ENCODE measurements at regions of chr5 and their contacts with region 1.

Region 1: DNA sequence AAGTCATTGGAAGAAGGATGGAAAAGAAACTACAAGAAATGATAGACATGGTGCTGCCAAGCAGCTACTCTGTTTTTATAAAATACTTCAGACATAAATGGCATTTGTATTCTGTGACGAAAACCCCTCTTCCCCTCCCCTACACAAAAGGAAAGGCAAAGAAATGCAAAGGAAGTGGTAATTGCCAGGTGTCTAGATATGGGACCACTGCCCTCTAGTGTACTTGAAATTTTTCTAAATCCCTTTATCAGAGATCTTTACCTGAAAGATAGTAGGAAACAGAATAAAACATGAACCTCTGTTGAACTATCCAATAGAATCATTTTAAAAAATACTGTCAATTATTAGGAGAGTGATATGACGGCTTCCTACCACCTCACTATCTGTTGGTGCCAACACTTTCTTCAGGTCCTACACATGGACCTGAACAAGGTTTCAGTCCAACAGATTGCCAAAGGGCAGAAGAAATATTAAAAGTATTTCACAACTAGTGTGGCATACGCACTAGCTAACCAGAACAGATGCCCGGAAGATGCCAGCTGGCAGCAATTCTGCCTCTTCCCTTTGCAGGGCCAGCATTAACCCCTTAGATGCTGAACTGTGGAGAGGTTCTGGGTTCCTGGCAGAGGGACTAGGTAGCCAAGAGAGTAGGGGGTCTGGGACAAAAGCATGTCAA is 104.1 kb downstream of the TSSK1B start:
- DNase-seq: peak; percentile 14
- H3K4me3 Mint-ChIP-seq: no peak overlapping the region
- H3K27ac Mint-ChIP-seq: no peak overlapping the region
- H3K4me1 Mint-ChIP-seq: peaks cover 16% of the 10 kb centered on the region
- H3K27me3 Mint-ChIP-seq: no peaks in the 10 kb centered on the region

Region 2: GRCh38 chr5:112109331-112110007 is 1221.2 kb before region 1 on chr5:
- CTCF ChIA-PET with region 1: no interaction called
- intact Hi-C with region 1: no loop called
- DNase-seq: no peak
- H3K4me3 Mint-ChIP-seq: no peak overlapping the region
- H3K27ac Mint-ChIP-seq: no peak overlapping the region
- H3K4me1 Mint-ChIP-seq: no peaks in the 10 kb centered on the region
- H3K27me3 Mint-ChIP-seq: peaks cover 18% of the 10 kb centered on the region

Region 3: DNA sequence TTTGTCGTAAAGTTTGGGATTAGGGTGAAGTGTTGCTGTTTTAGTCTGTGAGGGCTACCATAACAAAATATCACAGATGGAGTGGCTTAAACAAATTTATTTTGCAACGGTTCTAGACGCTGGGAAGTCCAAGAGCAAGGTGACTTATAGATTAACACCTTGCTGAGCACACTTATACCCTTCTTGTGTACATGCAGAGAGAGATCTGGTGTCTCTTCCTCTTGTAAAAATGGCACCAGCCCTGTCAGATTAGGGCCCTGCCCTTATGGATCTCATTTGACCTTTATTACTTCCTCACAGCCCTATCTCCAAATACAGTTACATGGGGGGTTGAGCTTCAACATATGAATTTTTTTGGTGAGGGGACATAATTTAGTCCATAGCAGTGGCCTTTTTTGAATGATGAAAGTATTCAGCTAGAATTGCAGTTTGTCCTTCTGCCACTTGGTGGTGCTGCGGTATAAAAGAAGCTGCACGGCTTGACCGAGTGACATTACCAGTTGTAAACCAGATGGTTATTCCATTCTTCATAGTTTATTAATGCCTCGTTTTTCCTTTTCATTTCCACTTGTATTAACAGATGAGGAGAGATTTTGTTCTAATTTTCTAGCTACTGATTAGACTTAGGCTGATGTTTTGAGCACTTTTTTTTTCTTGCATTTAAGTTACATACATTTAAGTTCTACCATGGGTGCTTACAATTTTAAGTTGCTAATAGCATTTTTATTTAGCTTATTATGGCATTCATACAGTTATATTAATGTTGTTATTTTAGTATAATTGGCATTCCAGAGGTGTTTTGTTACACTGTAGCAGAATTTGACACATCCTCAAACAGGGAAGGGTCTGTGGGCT is 334.7 kb before region 1 on chr5:
- CTCF ChIA-PET with region 1: interaction called, 19 read pairs
- intact Hi-C with region 1: loop called (anchors 1 kb)
- DNase-seq: peak; percentile 85
- H3K4me3 Mint-ChIP-seq: no peak overlapping the region
- H3K27ac Mint-ChIP-seq: no peak overlapping the region
- H3K4me1 Mint-ChIP-seq: peaks cover 14% of the 10 kb centered on the region
- H3K27me3 Mint-ChIP-seq: no peaks in the 10 kb centered on the region

Region 4: GRCh38 chr5:113090336-113091106 is 240.2 kb before region 1 on chr5:
- CTCF ChIA-PET with region 1: no interaction called
- intact Hi-C with region 1: loop called (anchors 2 kb)
- DNase-seq: peak; percentile 25
- H3K4me3 Mint-ChIP-seq: no peak overlapping the region
- H3K27ac Mint-ChIP-seq: no peak overlapping the region
- H3K4me1 Mint-ChIP-seq: peaks cover 6% of the 10 kb centered on the region
- H3K27me3 Mint-ChIP-seq: no peaks in the 10 kb centered on the region

Region 5: GRCh38 chr5:113294311-113295110 is 36.2 kb before region 1 on chr5:
- CTCF ChIA-PET with region 1: interaction called, 3 read pairs
- intact Hi-C with region 1: loop called (anchors 2 kb)
- DNase-seq: peak; percentile 79
- H3K4me3 Mint-ChIP-seq: peak overlapping the region; percentile 81
- H3K27ac Mint-ChIP-seq: no peak overlapping the region
- H3K4me1 Mint-ChIP-seq: peaks cover 14% of the 10 kb centered on the region
- H3K27me3 Mint-ChIP-seq: peaks cover 42% of the 10 kb centered on the region

Region 6: GRCh38 chr5:113641715-113642114 is 311.0 kb after region 1 on chr5:
- CTCF ChIA-PET with region 1: no interaction called
- intact Hi-C with region 1: no loop called
- DNase-seq: no peak
- H3K4me3 Mint-ChIP-seq: no peak overlapping the region
- H3K27ac Mint-ChIP-seq: no peak overlapping the region
- H3K4me1 Mint-ChIP-seq: no peaks in the 10 kb centered on the region
- H3K27me3 Mint-ChIP-seq: peaks cover 2% of the 10 kb centered on the region